Activated T-helper 2 cell treated with anti-CD3 and anti-CD28 coated beads, Interferon-gamma antibody, Interleukin-2, Interleukin-4, amounts not matched to agents 10 μg/mL and 5 μg/mL and 100 μg/mL, durations not matched to agents 14 hours and 24 hours and 36 hours (primary cell): ENCODE measurements at regions of chr1 and their contacts with region 1.

Region 1: DNA sequence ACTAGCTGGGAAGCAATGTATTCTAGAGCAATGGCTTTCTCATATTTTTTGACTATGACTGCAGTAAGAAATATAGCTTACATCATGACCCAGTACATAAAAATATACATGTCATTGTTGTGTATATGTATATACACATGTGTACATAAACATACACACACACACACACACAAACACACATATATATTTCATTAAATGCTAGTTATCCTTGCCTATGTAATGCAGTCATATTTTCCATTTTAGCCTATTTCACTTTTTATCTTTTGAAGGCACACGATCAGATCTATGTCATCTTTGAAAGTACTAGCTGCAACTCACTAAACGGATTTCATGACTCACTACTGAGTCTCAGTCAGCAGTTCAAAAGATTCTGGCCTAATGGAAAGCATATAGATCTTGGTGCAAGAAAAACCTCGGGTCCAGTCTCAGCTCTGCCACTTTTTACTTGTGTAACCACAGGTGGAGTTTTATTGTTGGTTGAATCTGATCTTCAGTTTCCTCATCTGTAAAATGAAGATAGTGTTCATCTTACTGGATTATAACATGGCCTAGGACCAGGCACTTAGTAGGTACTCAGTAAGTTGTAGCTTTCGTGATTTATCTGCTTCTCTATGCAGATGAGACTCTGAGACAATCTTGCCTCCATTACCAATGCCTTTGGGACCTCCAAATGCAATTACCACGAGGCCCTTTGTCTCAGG is 325.6 kb downstream of the RRAGC start:
- DNase-seq: no peak
- H3K4me3 Mint-ChIP-seq: no peak overlapping the region
- H3K27ac Mint-ChIP-seq: peak overlapping the region; percentile 28
- H3K4me1 Mint-ChIP-seq: peaks cover 15% of the 10 kb centered on the region
- H3K27me3 Mint-ChIP-seq: peaks cover 2% of the 10 kb centered on the region

Region 2: DNA sequence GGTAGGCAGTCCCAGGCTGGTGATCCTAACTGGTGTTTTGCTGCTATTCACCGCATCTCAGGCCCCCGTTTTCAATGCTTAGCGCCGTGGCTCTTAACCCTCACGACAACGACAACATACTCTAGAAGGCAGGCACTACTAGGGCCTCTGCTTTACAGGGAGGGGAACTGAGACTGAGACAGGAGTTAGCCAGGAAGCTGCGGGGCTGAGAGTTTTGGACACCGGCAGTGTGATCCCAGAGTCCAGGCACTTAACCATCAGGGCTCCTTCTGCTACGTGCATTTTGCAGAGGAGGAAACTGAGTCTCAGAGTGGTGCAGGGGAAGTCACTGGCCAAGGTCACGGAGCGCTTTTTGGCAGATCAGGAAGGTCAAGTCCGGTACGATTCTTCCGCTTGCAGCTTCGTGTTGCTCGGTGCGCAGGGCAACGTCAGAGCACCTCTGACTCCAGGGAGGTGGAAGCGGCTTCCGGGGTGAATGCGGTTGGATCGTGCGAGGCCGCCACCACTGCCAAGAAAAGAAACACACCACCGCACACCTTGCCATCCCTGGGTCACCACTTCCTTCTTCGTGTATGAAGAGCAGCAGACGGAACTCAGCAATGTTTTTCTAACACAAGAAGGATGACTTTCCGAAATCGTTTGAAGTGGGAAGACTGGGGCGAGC is 25.4 kb after region 1 on chr1:
- intact Hi-C with region 1: loop called (anchors 1 kb)
- DNase-seq: peak; percentile 91
- H3K4me3 Mint-ChIP-seq: peak overlapping the region; percentile 41
- H3K27ac Mint-ChIP-seq: peak overlapping the region; percentile 88
- H3K4me1 Mint-ChIP-seq: peaks cover 81% of the 10 kb centered on the region
- H3K27me3 Mint-ChIP-seq: peaks cover 1% of the 10 kb centered on the region